ENCODE measurements at regions of chr11 and their contacts with region 1.

Region 1: DNA sequence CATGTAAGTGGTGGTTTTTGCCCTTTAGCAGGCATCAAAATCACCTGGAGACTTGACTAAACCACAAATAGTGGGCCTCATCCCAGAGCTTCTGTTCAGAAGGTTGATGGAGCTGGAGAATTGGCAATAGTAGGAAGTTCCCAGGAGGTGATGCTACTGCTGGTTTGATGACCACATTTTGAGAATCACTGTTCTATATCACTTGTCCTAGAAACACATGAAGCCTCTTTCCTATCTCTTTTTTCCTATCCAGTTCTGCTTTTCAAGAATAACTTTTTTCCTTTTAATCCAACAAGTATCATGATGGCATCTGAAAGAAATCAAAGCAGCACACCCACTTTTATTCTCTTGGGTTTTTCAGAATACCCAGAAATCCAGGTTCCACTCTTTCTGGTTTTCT is at the start of gene OR5D13:
- DNase-seq: no peak
- ATAC-seq: no peak
- H3K4me3 ChIP-seq: no peak within 1 kb of the TSS
- H3K4me3 Mint-ChIP-seq: no peak within 1 kb of the TSS
- H3K27ac ChIP-seq: no peak within 1 kb of the TSS
- H3K27ac Mint-ChIP-seq: no peak within 1 kb of the TSS
- H3K4me1 ChIP-seq: no peaks in the 10 kb centered on the region
- H3K4me1 Mint-ChIP-seq: no peaks in the 10 kb centered on the region
- H3K27me3 ChIP-seq: no peaks in the 10 kb centered on the region
- H3K27me3 Mint-ChIP-seq: no peaks in the 10 kb centered on the region
- CTCF ChIP-seq: no peak
- total RNA-seq, gene OR5D13: not detected

Region 2: DNA sequence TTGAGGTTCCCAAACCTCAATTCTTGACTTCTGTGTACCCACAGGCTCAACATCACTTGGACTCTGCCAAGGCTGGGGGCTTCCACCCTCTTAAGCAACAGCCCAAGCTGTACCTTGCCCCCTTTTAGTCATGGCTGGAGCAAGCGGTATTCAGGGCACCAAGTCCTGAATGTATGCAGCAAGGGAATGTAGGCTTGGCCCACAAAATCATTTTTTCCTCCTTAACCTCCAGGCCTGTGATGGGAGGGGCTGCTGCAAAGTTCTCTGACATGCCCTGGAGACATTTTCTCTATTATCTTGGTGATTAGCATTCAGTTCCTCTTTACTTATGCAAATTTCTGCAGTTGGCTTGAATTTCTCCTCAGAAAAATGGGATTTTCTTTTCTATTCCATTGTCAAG is 33.1 kb after region 1 on chr11:
- intact Hi-C with region 1: no loop called
- DNase-seq: no peak
- ATAC-seq: no peak
- H3K4me3 ChIP-seq: no peak overlapping the region
- H3K4me3 Mint-ChIP-seq: no peak overlapping the region
- H3K27ac ChIP-seq: no peak overlapping the region
- H3K27ac Mint-ChIP-seq: no peak overlapping the region
- H3K4me1 ChIP-seq: no peaks in the 10 kb centered on the region
- H3K4me1 Mint-ChIP-seq: no peaks in the 10 kb centered on the region
- H3K27me3 ChIP-seq: no peaks in the 10 kb centered on the region
- H3K27me3 Mint-ChIP-seq: no peaks in the 10 kb centered on the region
- CTCF ChIP-seq: no peak

Region 3: DNA sequence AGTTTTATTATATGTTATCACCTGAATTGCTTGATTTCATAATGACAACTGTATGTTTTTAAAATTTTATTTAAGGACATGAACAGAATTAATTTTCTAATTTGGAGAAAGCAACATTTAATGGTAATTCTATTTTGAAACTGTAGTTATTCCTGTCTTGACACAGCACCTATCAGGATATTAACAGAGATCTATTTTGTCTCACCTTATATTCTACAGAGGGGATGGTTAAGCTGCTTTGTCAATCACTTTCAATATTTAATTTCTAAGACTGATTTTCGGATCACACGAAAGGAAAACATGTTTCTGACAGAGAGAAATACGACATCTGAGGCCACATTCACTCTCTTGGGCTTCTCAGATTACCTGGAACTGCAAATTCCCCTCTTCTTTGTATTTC is 65.3 kb after region 1 on chr11 and contains the start of gene OR5D16:
- intact Hi-C with region 1: loop called (anchors 10 kb)
- DNase-seq: no peak
- ATAC-seq: no peak
- H3K4me3 ChIP-seq: no peak within 1 kb of the TSS
- H3K4me3 Mint-ChIP-seq: no peak within 1 kb of the TSS
- H3K27ac ChIP-seq: no peak within 1 kb of the TSS
- H3K27ac Mint-ChIP-seq: no peak within 1 kb of the TSS
- H3K4me1 ChIP-seq: no peaks in the 10 kb centered on the region
- H3K4me1 Mint-ChIP-seq: no peaks in the 10 kb centered on the region
- H3K27me3 ChIP-seq: no peaks in the 10 kb centered on the region
- H3K27me3 Mint-ChIP-seq: no peaks in the 10 kb centered on the region
- CTCF ChIP-seq: no peak
- total RNA-seq, gene OR5D16: not detected

Region 4: DNA sequence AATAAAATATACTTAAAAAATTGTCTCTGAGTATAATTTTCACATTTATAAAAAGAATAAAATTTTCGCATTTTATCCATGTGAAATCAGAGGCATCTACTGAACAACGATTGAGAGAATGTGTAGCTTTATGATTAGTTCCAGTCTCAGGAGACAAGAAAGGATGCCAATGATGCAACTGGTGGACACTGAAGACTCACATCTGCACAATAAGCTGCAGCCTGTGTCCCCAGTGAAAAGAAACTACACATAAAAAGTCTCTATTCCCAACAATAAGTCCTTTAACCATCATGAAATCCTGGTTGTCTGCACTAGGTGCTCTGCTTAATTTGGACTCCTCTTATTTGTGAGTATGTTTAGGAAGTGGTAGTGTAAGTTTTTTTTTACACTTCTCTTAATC is 276.3 kb after region 1 on chr11:
- intact Hi-C with region 1: no loop called
- DNase-seq: no peak
- ATAC-seq: no peak
- H3K4me3 ChIP-seq: no peak overlapping the region
- H3K4me3 Mint-ChIP-seq: no peak overlapping the region
- H3K27ac ChIP-seq: no peak overlapping the region
- H3K27ac Mint-ChIP-seq: no peak overlapping the region
- H3K4me1 ChIP-seq: no peaks in the 10 kb centered on the region
- H3K4me1 Mint-ChIP-seq: no peaks in the 10 kb centered on the region
- H3K27me3 ChIP-seq: no peaks in the 10 kb centered on the region
- H3K27me3 Mint-ChIP-seq: no peaks in the 10 kb centered on the region
- CTCF ChIP-seq: no peak